ENCODE measurements at regions of chr6 and their contacts with region 1.

Region 1: DNA sequence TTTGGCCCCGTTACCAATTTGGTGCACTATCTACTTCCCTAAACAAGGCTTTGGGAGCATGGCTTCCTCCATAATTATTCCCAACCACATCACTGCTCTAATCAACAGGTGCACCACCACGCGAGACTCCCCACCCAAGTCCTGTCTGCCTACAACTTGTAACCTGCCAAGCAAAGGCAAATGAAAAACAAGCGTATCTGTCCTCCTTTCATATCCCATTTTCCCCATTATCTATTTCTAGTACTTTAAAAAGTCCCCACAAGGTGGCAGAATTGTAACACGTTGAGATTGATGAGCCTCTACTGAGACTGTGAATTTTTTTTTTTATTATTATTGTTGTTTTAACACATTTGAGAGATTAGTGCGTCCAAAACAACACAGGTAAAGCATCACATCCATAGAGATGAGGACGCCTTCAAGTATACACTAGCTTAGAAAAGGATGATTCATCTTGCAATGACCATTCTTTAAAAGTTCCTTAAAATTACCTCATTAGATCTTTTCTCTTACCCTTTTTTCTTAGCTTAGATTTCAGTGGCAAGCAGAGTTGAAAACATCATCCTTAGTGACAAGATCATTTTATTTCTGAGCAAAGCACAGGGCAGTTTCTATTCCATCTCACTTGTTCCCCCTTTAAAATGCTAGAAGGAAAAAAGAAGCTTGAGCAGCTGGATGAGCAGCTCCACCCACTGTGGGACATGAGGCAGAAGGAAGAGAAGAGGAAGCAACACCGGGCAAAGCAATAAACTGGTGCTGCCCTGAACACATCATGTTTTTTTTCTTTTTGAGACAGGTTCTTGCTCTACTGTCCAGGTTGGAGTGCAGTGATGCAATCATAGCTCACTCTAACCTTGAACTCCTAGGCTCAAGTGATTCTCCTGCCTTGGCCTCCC is 210.8 kb downstream of the ARHGAP18 start:
- DNase-seq: no peak
- ATAC-seq: peak; percentile 65
- H3K4me3 Mint-ChIP-seq: peak overlapping the region; percentile 46
- H3K27ac Mint-ChIP-seq: peak overlapping the region; percentile 85
- H3K4me1 Mint-ChIP-seq: peaks cover 58% of the 10 kb centered on the region
- H3K27me3 Mint-ChIP-seq: no peaks in the 10 kb centered on the region
- CTCF ChIP-seq: peak; percentile 76

Region 2: DNA sequence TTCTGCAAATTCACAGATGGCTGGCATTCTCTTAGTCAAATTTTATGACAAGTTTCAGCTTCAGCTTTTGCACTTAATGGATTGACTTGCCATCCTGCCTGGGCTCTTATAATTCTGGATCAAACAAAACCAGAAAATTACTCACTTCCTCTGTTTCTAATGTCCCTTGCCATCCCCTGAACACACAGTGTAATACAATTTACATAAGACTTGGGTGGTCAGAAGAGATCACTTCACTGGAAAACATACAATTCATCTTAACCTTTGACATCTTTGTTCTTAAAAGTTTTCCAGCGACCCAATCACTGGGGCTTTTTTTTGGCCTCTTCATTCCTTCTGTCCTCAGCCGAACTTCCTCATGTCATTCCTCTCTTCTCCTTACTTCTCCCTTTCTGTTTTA is 11.8 kb after region 1 on chr6:
- CTCF ChIA-PET with region 1: interaction called, 14 read pairs
- POLR2A ChIA-PET with region 1: no interaction called
- intact Hi-C with region 1: no loop called
- DNase-seq: no peak
- ATAC-seq: no peak
- H3K4me3 Mint-ChIP-seq: no peak overlapping the region
- H3K27ac Mint-ChIP-seq: no peak overlapping the region
- H3K4me1 Mint-ChIP-seq: peaks cover 4% of the 10 kb centered on the region
- H3K27me3 Mint-ChIP-seq: peaks cover 1% of the 10 kb centered on the region
- CTCF ChIP-seq: no peak

Region 3: DNA sequence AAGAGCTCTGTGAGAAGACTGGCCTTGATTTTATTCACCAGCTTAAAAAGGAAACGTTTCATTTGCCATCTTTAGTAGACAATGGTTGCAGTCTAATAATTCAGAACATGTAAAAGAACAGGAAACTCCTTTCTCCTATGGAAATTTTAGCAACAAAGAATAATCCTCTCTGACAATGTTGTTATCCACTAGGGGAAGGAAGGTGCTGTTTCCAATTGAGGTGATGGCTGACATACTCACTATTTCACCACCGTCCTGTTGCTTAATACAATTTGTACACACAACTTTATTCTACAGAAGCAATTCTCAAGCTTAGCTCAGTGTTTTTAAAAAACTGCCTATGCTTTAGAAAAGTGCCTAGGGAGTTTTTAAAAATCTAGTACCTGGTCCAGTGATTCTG is 18.1 kb after region 1 on chr6:
- CTCF ChIA-PET with region 1: interaction called, 14 read pairs
- POLR2A ChIA-PET with region 1: no interaction called
- intact Hi-C with region 1: no loop called
- DNase-seq: no peak
- ATAC-seq: no peak
- H3K4me3 Mint-ChIP-seq: no peak overlapping the region
- H3K27ac Mint-ChIP-seq: no peak overlapping the region
- H3K4me1 Mint-ChIP-seq: peaks cover 4% of the 10 kb centered on the region
- H3K27me3 Mint-ChIP-seq: no peaks in the 10 kb centered on the region
- CTCF ChIP-seq: no peak

Region 4: DNA sequence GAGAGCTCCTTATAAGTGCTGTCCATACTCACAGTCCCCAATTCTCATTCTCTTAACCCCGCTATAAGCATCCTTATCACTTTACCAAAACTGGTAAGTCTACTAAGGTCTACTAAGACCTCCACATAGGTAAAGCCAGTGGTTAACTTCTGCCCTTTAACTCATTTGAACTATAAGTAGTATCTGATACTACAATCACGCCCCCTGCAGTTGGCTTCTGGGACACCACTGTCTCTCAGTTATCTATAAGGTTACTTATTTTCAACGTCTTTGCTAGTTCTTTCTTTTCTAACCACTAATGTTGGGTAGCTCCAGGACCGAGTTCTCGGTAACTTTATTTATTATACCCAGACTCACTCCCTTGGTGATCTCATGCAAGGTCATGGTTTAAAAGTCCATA is 68.2 kb after region 1 on chr6:
- CTCF ChIA-PET with region 1: interaction called, 21 read pairs
- POLR2A ChIA-PET with region 1: interaction called, 4 read pairs
- intact Hi-C with region 1: loop called (anchors 2 kb)
- DNase-seq: peak; percentile 80
- ATAC-seq: peak; percentile 61
- H3K4me3 Mint-ChIP-seq: no peak overlapping the region
- H3K27ac Mint-ChIP-seq: no peak overlapping the region
- H3K4me1 Mint-ChIP-seq: peaks cover 3% of the 10 kb centered on the region
- H3K27me3 Mint-ChIP-seq: peaks cover 3% of the 10 kb centered on the region
- CTCF ChIP-seq: peak; percentile 57

Region 5: DNA sequence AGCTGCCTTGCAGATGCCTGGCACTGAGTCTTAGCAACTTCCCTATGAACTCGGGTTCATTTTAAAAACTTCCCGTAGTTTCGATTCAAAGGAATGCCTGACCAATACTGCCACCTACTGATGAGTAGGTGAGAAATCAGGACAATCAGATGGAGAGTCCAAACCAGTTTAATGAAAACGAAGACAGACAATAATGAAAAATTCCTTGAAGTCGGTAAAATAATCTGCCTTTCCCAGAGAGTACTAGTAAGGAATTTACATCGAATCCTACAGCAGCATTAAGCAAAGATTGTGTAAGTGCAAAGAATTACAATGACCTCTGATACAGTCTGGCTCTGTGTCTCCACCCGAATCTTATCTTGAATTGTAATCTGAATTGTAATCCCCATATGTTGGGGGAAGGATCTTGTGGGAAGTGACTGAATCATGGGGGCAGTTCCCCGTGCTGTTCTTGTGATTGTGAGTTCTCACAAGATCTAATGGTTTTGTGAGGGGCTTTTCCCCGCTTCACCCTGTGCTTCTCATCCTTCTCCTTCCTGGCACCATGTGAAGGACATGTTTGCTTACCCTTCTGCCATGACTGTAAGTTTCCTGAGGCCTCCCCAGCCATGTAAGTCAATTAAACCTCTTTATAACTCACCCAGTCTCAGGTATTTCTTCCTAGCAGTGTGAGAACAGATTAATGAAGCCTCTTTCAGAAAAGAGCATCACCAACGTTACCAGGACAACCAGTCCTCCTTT is 76.4 kb after region 1 on chr6:
- CTCF ChIA-PET with region 1: interaction called, 10 read pairs
- POLR2A ChIA-PET with region 1: no interaction called
- intact Hi-C with region 1: loop called (anchors 2 kb)
- DNase-seq: no peak
- ATAC-seq: no peak
- H3K4me3 Mint-ChIP-seq: no peak overlapping the region
- H3K27ac Mint-ChIP-seq: no peak overlapping the region
- H3K4me1 Mint-ChIP-seq: peaks cover 7% of the 10 kb centered on the region
- H3K27me3 Mint-ChIP-seq: no peaks in the 10 kb centered on the region
- CTCF ChIP-seq: peak; percentile 69

Region 6: GRCh38 chr6:129661536-129662405 is 162.6 kb after region 1 on chr6:
- CTCF ChIA-PET with region 1: no interaction called
- POLR2A ChIA-PET with region 1: no interaction called
- intact Hi-C with region 1: no loop called
- DNase-seq: no peak
- ATAC-seq: no peak
- H3K4me3 Mint-ChIP-seq: no peak overlapping the region
- H3K27ac Mint-ChIP-seq: no peak overlapping the region
- H3K4me1 Mint-ChIP-seq: peaks cover 13% of the 10 kb centered on the region
- H3K27me3 Mint-ChIP-seq: no peaks in the 10 kb centered on the region
- CTCF ChIP-seq: no peak

Region 7: GRCh38 chr6:129923530-129924250 is 424.5 kb after region 1 on chr6:
- CTCF ChIA-PET with region 1: no interaction called
- POLR2A ChIA-PET with region 1: no interaction called
- intact Hi-C with region 1: no loop called
- DNase-seq: no peak
- ATAC-seq: no peak
- H3K4me3 Mint-ChIP-seq: no peak overlapping the region
- H3K27ac Mint-ChIP-seq: no peak overlapping the region
- H3K4me1 Mint-ChIP-seq: peaks cover 4% of the 10 kb centered on the region
- H3K27me3 Mint-ChIP-seq: peaks cover 4% of the 10 kb centered on the region
- CTCF ChIP-seq: no peak